Posterior vena cava (tissue), 2 donors: ENCODE measurements at regions of chrX and their contacts with region 1.

Region 1: DNA sequence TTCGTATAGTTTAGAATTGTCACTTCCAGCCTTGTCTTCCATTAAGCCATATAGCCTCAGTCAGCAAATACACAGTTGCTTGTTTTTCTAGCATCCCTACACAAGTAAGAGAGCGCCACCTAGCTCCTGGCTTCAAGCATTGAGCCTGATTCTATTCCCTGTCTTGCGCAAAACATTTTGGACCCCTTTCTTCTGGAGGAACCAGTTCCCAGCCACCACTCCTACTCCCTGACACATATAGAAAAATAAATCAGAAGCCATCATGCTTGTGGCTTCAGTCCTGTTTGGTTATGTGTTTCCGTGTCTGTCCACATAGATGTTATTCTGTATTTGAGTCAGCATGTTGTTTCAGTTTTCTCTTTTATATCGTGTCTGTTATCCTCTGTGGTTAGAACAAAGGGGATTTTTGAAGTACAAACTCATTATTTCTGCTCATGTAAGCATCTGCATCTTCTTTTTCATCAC is 59.9 kb downstream of the GK start:
- DNase-seq: no peak

Region 2: DNA sequence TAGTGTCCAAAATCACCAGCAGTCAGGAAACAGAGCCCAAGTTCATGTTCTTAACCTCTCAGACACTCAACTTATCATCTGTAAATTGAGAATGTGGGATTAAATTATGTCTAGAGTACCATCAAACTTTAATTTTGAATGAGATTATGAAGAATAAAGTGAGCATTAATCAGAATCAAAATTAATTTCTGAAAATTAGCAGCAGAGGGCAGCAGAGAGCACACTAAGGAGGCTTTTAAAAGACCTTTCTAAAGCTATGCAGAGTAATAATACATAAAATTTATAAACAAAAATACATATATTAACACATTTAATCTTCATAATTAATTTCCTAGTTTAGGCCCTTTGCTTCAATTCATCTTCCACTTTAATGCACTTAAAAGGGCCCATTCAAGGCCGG is 142.6 kb before region 1 on chrX:
- intact Hi-C with region 1: loop called in 1 of 2 experiments (anchors 5 kb)
- DNase-seq: no peak

Region 3: DNA sequence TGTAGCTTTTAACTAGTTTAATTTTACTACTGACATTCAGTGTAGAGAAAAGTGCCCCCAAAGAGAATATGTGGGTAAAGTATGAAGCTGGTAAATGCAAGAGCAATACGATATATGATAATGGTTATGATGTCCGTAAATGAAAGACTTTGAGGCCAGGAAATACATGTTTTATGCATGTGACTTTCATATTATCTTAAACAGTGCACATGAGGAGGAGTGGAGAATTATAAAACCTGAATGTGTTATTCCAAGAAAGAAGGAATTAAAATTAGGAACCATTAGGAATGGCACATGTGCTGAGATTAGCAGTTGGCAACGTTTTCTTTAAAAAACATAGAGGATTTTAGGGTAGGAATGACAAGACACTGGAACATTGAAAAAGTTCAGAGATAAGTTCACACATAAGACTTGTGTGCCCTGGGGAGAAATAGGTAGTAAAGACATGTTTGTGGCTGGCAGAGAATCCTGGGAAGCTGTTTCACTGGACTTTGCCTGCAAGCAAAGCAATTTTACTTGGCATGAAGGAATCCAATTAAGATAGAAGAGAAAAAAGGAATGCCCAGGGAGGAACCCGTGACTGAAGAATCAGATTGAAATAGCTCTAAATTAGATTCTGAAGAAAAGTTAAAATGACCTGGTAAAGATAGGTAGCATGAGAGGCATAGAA is 39.8 kb before region 1 on chrX:
- intact Hi-C with region 1: no loop called
- DNase-seq: no peak